ENCODE measurements at regions of chr17 and their contacts with region 1.

Region 1: DNA sequence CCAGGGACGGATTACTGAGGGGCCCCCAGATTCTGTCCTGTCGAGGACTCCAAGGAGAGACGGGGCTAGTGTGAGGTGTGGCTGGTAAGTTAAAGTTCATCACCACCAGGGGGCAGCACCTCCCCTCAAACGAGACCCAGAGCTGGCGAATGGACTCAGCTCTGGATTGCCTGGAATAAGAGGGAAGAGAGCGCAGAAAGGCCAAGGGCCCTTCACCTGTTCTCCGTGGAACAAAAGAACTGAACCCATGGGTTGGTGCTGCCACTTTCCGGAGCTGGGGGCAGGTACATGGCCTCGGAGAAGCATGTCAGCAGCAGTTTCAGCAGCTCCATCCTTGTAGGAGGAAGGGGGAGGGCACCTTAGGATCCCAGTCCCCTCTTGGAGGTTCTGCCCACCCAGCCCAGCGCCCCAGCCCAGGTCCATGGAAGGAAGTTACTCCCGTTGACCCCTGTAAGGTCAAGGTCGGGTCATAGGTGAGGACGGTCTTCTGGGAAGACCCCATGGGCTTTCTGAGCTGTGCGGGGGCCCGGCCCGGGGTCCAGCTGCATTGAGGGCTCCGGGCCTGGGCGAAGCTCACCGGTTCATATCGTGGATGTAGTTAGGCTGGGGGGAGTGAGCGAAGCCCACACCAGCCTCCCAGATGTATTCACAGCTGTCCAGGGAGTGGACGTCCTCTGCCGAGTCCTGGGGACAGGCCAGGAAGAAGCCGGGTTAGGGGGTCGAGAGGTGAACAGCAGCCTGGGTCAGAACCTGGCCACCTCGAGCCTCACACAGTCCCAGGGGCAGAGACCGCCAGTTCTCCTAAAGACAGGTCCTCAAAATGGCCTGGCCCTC is 10.7 kb downstream of the HID1 start:
- DNase-seq: peak; percentile 70 to 97
- H3K4me3 ChIP-seq: no peak overlapping the region
- H3K27ac ChIP-seq: no peak overlapping the region
- H3K4me1 ChIP-seq: peaks cover 0 to 7% (median 1%) of the 10 kb centered on the region in 4 experiments; a peak in 4 of 7 replicates
- H3K27me3 ChIP-seq: peaks cover 0 to 5% (median 2%) of the 10 kb centered on the region in 4 experiments; a peak in 3 of 7 replicates
- CTCF ChIP-seq: peak; percentile 79 to 83 (median 82)
- EP300 ChIP-seq: no peak
- POLR2A ChIP-seq: no peak
- RAD21 ChIP-seq: peak; percentile 88 to 91

Region 2: DNA sequence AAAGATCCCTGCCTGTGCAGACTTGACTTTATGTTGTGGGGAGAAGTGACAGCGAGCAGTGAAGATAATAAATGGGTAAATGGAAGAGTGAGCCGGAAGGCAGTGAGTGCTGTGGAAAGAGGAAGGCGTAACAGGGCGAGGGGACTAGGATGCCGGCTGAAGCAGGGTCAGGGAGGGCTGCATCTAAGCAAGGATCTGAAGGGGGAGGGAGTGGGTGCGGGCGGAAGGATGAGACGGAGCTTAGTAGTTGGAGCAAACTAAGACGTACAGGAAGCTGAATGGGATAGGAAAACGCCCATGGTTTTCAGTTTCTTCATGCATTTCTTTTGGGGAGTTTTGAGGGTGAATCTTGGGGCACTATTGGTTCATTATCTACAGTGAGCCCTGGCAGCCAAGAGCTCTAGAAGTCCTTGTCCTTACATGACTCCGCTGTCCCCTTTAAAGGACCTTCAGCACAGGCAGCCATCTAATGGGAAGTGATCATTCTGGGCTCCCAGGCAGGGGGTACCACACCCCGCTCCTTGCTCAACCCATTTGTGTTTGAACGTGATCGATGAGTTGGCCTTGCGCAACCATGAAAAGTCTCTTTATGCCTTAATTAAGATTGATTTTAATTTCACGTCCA is 175.3 kb before region 1 on chr17:
- CTCF ChIA-PET with region 1: interaction called, 13 read pairs
- POLR2A ChIA-PET with region 1: no interaction called
- DNase-seq: no peak
- H3K4me3 ChIP-seq: no peak overlapping the region
- H3K27ac ChIP-seq: no peak overlapping the region
- H3K4me1 ChIP-seq: peaks cover 0 to 3% (median 3%) of the 10 kb centered on the region in 4 experiments; a peak in 5 of 7 replicates
- H3K27me3 ChIP-seq: no peaks in the 10 kb centered on the region
- CTCF ChIP-seq: no peak
- EP300 ChIP-seq: no peak
- POLR2A ChIP-seq: no peak
- RAD21 ChIP-seq: no peak

Region 3: DNA sequence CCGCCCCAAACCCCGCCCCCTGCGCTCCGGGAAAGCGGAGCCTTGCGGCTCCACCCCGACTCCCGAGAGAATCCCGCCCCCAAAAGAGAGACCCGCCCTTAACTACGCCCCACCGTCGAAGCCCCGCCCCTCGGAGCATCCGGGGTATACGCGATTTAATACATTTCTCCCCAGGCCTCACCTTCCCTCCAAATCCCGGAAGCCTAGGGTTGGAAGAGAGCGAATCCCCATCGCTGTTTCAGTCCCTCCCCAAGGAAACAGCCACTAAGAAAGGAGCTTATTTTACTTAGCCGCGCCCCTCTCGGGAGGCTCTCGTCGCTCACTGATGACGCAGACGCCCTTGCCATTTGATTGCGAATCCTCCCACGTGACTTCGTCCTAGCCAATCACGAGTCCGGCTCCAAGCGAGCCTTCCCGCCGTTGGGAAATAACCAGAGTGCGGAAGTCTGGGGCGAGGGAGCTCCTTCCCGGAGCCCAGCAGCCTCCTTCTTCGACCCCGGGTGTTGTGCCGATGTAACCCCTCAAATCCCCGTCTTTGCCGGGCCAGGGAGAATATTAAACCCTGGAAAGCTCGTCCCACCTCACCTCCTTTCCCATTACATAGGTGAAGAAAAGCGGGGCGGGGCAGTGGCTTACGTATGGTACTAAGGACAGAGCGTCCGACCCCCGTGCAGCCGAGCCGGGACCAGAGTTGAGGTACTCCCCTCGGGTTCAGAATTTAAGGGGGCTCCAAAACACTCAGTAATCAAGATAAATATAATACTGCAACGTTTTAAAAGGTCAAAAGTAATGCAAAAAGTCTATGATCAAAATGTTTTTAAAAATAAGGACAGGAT is 88.6 kb before region 1 on chr17:
- CTCF ChIA-PET with region 1: interaction called, 20 read pairs
- POLR2A ChIA-PET with region 1: no interaction called
- DNase-seq: peak; percentile 98 to 99
- H3K4me3 ChIP-seq: peak overlapping the region; percentile 70 to 99 (median 84)
- H3K27ac ChIP-seq: peak overlapping the region; percentile 90
- H3K4me1 ChIP-seq: peaks cover 0 to 14% (median 6%) of the 10 kb centered on the region in 4 experiments; a peak in 6 of 7 replicates
- H3K27me3 ChIP-seq: peaks cover 0 to 3% (median 0%) of the 10 kb centered on the region in 4 experiments; a peak in 2 of 7 replicates
- CTCF ChIP-seq: no peak
- EP300 ChIP-seq: peak in 1 of 2 experiments; percentile 58; a peak in 1 of 3 replicates
- POLR2A ChIP-seq: peak in 1 of 2 experiments; percentile 98; a peak in 2 of 3 replicates
- RAD21 ChIP-seq: no peak

Region 4: GRCh38 chr17:74923533-74924249 is 38.2 kb before region 1 on chr17:
- CTCF ChIA-PET with region 1: interaction called, 1,072 read pairs
- POLR2A ChIA-PET with region 1: interaction called, 3 read pairs
- DNase-seq: peak in 1 of 2 experiments; percentile 89
- H3K4me3 ChIP-seq: peak overlapping the region; percentile 33 to 74 (median 36)
- H3K27ac ChIP-seq: no peak overlapping the region
- H3K4me1 ChIP-seq: peaks cover 0 to 19% (median 16%) of the 10 kb centered on the region in 4 experiments; a peak in 6 of 7 replicates
- H3K27me3 ChIP-seq: peaks cover 40 to 62% (median 53%) of the 10 kb centered on the region in 4 experiments
- CTCF ChIP-seq: peak; percentile 71 to 93 (median 80)
- EP300 ChIP-seq: no peak
- POLR2A ChIP-seq: no peak
- RAD21 ChIP-seq: peak; percentile 73 to 79

Region 5: GRCh38 chr17:74987418-74987908 is 25.6 kb after region 1 on chr17 and contains the start of gene CDR2L:
- CTCF ChIA-PET with region 1: interaction called, 59 read pairs
- POLR2A ChIA-PET with region 1: interaction called, 5 read pairs
- DNase-seq: peak; percentile 79 to 97
- H3K4me3 ChIP-seq: peak within 1 kb of the TSS; percentile 82 to 93 (median 84)
- H3K27ac ChIP-seq: peak within 1 kb of the TSS; percentile 62
- H3K4me1 ChIP-seq: peaks cover 0 to 7% (median 6%) of the 10 kb centered on the region in 4 experiments; a peak in 6 of 7 replicates
- H3K27me3 ChIP-seq: no peaks in the 10 kb centered on the region
- CTCF ChIP-seq: no peak
- EP300 ChIP-seq: peak in 1 of 2 experiments; percentile 55; a peak in 1 of 3 replicates
- POLR2A ChIP-seq: peak; percentile 69 to 87
- RAD21 ChIP-seq: no peak
- total RNA-seq, gene CDR2L: 38.1 and 40.5 TPM in 2 replicates

Region 6: DNA sequence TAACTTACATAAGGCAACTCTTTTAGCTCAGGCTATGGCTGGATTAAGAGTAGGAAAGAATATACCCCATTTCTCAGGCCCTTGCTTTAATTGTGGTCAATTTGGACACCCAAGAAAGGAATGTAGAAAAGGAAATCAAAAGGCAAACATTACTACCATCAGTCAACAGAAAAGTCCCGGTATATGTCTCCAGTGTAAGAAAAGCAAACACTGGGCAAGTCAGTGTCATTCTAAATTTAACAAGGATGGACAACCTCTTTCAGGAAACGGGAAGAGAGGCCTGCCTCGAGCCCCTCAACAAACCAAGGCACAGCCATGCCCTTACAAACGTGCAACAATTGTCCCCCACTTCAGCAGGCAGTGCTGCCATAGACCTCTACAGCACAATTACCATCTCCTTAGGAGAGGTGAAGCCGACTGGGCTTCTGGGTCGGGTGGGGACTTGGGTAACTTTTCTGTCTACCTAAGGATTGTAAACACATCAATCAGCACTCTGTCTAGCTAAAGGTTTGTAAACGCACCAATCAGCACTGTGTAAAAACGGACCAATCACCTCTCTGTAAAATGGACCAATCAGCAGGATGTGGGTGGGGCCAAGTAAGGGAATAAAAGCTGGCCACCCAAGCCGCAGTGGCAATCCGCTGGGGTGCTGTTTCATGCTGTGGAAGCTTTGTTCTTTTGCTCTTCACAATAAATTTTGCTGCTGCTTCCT is 63.0 kb after region 1 on chr17:
- CTCF ChIA-PET with region 1: interaction called, 22 read pairs
- POLR2A ChIA-PET with region 1: interaction called, 5 read pairs
- DNase-seq: no peak
- H3K4me3 ChIP-seq: no peak overlapping the region
- H3K27ac ChIP-seq: no peak overlapping the region
- H3K4me1 ChIP-seq: no peaks in the 10 kb centered on the region
- H3K27me3 ChIP-seq: no peaks in the 10 kb centered on the region
- CTCF ChIP-seq: no peak
- EP300 ChIP-seq: no peak
- POLR2A ChIP-seq: no peak
- RAD21 ChIP-seq: no peak

Region 7: GRCh38 chr17:75109407-75110233 is 147.7 kb after region 1 on chr17 and contains the start of gene ARMC7:
- CTCF ChIA-PET with region 1: interaction called, 11 read pairs
- POLR2A ChIA-PET with region 1: no interaction called
- DNase-seq: peak in 1 of 2 experiments; percentile 97
- H3K4me3 ChIP-seq: peak within 1 kb of the TSS; percentile 49 to 78 (median 75)
- H3K27ac ChIP-seq: no peak within 1 kb of the TSS; the same call in 1 of the 2 replicates
- H3K4me1 ChIP-seq: peaks cover 0 to 2% (median under 1%) of the 10 kb centered on the region in 4 experiments; a peak in 3 of 7 replicates
- H3K27me3 ChIP-seq: no peaks in the 10 kb centered on the region
- CTCF ChIP-seq: no peak
- EP300 ChIP-seq: no peak
- POLR2A ChIP-seq: peak in 1 of 2 experiments; percentile 56; a peak in 2 of 3 replicates
- RAD21 ChIP-seq: no peak; a peak in 1 of 4 replicates
- total RNA-seq, gene ARMC7: 13.6 TPM in 2 replicates

Region 8: DNA sequence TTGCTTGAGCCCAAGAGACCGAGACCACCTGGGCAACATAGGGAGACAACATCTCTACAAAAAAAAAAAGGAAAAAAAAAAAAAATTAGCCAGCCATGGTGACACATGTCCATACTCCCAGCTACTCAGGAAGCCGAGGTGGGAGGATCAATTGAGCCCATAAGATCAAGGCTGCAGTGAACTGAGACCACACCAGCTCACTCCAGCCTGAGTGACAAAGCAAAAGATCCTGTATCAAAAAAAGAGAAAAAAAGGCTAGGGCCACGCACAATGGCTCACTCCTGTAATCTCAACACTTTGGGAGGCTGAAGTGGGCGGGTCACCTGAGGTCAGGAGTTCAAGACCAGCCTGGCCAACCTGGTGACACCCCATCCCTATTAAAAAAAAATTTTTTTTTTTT is 207.1 kb after region 1 on chr17:
- CTCF ChIA-PET with region 1: no interaction called
- POLR2A ChIA-PET with region 1: no interaction called
- DNase-seq: no peak
- H3K4me3 ChIP-seq: no peak overlapping the region
- H3K27ac ChIP-seq: no peak overlapping the region
- H3K4me1 ChIP-seq: no peaks in the 10 kb centered on the region; a peak in 1 of 7 replicates
- H3K27me3 ChIP-seq: no peaks in the 10 kb centered on the region
- CTCF ChIP-seq: no peak
- EP300 ChIP-seq: no peak
- POLR2A ChIP-seq: no peak
- RAD21 ChIP-seq: no peak